IMR-90 (cell line): ENCODE measurements at regions of chr6 and their contacts with region 1.

Region 1: DNA sequence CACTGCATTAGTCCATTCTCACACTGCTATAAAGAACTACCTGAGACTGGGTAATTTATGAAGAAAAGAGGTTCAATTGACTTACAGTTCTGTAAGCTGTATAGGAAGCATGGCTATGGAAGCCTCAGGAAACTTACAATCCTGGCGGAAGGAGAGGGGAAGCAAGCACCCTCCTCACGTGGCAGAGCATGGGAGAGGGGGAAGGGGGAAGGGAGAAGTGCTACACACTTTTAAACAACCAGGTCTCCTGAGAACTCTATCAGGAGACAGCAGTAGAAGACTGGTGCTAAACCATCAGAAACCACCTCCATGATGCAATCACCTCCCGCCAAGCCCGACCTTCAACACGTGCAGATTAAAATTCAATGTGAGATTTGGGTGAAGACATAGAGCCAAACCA is 494.0 kb downstream of the GRIK2 start:
- DNase-seq: no peak
- ATAC-seq: no peak
- H3K4me3 ChIP-seq: no peak overlapping the region
- H3K27ac ChIP-seq: no peak overlapping the region
- H3K4me1 ChIP-seq: no peaks in the 10 kb centered on the region; the same call in 1 of the 2 replicates
- H3K27me3 ChIP-seq: no peaks in the 10 kb centered on the region
- CTCF ChIP-seq: no peak
- POLR2A ChIP-seq: no peak
- RAD21 ChIP-seq: no peak

Region 2: GRCh38 chr6:100780678-100781077 is 1106.9 kb before region 1 on chr6:
- CTCF ChIA-PET with region 1: no interaction called
- POLR2A ChIA-PET with region 1: no interaction called
- dilution Hi-C with region 1: no loop called
- in situ Hi-C with region 1: no loop called
- intact Hi-C with region 1: loop called (anchors 10 kb)
- DNase-seq: no peak
- ATAC-seq: no peak
- H3K4me3 ChIP-seq: no peak overlapping the region
- H3K27ac ChIP-seq: no peak overlapping the region
- H3K4me1 ChIP-seq: no peaks in the 10 kb centered on the region; the same call in 1 of the 2 replicates
- H3K27me3 ChIP-seq: no peaks in the 10 kb centered on the region
- CTCF ChIP-seq: no peak
- POLR2A ChIP-seq: no peak
- RAD21 ChIP-seq: no peak

Region 3: DNA sequence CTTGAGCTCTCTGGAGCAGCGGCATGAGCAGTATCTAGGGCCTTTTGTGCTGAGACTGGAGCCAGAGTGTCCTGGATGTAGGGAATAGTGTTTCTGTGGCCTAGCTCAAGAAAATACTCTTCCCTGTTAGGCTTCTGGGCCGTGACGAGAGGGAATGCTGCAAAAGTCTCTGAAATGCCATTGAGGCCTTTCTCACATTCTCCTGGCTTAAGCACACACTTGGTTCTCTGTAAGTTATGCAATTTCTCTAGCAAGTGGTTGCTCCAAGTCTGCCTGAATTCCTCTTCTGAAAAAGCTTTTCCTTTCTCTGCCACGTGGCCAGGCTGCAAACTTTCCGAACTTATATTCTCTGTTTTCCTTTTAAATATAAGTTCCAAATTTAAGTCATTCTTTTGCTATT is 250.3 kb after region 1 on chr6:
- CTCF ChIA-PET with region 1: no interaction called
- POLR2A ChIA-PET with region 1: no interaction called
- dilution Hi-C with region 1: no loop called
- in situ Hi-C with region 1: no loop called
- intact Hi-C with region 1: loop called (anchors 10 kb)
- DNase-seq: no peak
- ATAC-seq: no peak
- H3K4me3 ChIP-seq: no peak overlapping the region
- H3K27ac ChIP-seq: no peak overlapping the region
- H3K4me1 ChIP-seq: no peaks in the 10 kb centered on the region
- H3K27me3 ChIP-seq: no peaks in the 10 kb centered on the region
- CTCF ChIP-seq: no peak
- POLR2A ChIP-seq: no peak
- RAD21 ChIP-seq: no peak